PC-3 (cell line): ENCODE measurements at regions of chr2 and their contacts with region 1.

Region 1: GRCh38 chr2:179951680-179952079 is 55.4 kb downstream of the CWC22 start:
- DNase-seq: no peak
- ATAC-seq: no peak
- H3K4me3 ChIP-seq: no peak overlapping the region
- H3K27ac ChIP-seq: no peak overlapping the region
- H3K4me1 ChIP-seq: peaks cover 15% of the 10 kb centered on the region
- H3K27me3 ChIP-seq: no peaks in the 10 kb centered on the region
- CTCF ChIP-seq: no peak

Region 2: DNA sequence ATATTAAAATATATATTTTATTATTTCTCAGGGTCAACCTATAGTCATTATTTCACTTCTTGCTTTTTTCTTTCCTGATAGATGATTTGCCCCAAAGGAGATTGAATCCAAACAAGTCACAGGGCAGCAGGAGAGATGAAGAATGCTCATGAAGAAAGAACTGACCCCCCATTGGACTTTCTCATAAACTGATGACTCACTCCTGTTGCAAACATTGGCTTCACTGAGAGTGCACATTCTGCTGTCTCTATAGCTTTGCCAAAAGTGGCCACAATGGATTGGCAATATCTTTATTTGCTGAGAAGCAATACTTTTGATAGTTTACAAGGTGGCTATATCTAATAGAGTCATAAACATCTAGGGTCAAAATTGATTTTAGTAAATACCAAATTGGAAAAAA is 34.4 kb before region 1 on chr2:
- CTCF ChIA-PET with region 1: no interaction called
- POLR2A ChIA-PET with region 1: no interaction called
- intact Hi-C with region 1: loop called (anchors 1 kb)
- DNase-seq: peak; percentile 80
- ATAC-seq: peak; percentile 89
- H3K4me3 ChIP-seq: no peak overlapping the region
- H3K27ac ChIP-seq: no peak overlapping the region
- H3K4me1 ChIP-seq: peaks cover 6% of the 10 kb centered on the region
- H3K27me3 ChIP-seq: no peaks in the 10 kb centered on the region
- CTCF ChIP-seq: no peak

Region 3: GRCh38 chr2:179963626-179964025 is 11.9 kb after region 1 on chr2:
- CTCF ChIA-PET with region 1: no interaction called
- POLR2A ChIA-PET with region 1: no interaction called
- intact Hi-C with region 1: loop called (anchors 1 kb)
- DNase-seq: peak; percentile 42
- ATAC-seq: peak; percentile 80
- H3K4me3 ChIP-seq: no peak overlapping the region
- H3K27ac ChIP-seq: peak overlapping the region; percentile 22; the same call in 1 of the 2 replicates
- H3K4me1 ChIP-seq: peaks cover 9% of the 10 kb centered on the region
- H3K27me3 ChIP-seq: no peaks in the 10 kb centered on the region
- CTCF ChIP-seq: no peak

Region 4: DNA sequence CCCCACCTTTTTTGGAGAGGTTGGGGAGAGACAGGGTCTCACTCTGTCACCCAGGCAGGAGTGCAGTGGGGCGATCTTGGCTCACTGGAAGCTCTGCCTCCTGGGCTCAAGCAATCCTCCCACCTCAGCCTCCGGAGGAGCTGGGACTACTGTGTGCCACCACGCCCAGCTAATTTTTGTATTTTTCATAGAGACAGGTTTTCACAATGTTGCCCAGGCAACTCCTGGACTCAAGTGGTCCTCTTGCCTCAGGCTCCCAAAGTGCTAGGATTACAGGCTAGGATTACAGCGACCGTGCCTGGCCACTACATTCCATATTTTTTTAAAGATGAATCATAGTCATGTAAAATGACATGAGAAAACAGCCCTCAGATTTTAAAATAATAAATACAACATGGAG is 23.1 kb after region 1 on chr2:
- CTCF ChIA-PET with region 1: no interaction called
- POLR2A ChIA-PET with region 1: no interaction called
- intact Hi-C with region 1: loop called (anchors 2 kb)
- DNase-seq: peak; percentile 81
- ATAC-seq: peak; percentile 99
- H3K4me3 ChIP-seq: no peak overlapping the region
- H3K27ac ChIP-seq: peak overlapping the region; percentile 54
- H3K4me1 ChIP-seq: peaks cover 16% of the 10 kb centered on the region
- H3K27me3 ChIP-seq: no peaks in the 10 kb centered on the region
- CTCF ChIP-seq: no peak

Region 5: DNA sequence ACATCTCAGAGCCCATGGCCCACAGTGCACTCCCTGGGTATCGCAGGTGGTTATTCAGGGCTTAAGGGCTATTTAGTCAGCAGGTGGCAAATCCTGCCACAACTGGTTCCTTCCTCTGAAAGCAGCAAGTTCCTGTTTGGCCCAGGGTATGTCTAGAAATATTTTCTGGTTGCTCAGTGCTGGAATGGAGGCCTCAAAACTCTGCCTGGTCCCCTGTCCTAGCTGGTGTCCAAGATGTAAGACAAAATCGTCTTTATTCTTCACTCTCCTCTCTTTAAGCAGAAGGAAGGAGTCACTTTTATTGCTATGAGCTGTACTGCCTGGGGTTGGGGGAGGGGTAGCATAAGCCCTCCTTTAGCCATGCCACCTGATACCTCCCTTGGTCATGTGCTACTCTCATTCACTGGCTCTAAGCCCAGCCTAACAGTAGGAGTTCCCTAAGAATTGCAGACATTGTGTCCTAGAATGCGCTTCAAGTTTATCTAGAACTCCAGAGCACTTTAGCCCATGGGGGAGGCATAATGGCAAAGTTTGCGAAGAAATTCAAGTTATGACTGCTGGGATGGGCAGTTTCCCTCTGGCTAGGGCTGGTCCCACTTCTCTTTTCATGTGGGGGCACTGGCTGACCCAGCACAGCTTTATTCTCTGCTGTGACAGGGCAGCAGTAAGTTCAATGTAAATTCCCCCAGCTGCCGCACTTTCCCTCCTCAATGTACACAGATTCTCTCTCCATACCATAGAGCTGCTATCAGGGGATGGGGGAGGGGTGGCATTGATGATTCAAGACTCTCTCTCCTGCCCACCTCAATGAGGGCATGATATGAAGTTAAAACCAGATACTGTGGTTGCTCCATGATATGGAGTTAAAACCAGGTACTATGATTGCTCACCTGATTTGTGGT is 82.6 kb after region 1 on chr2:
- CTCF ChIA-PET with region 1: no interaction called
- POLR2A ChIA-PET with region 1: no interaction called
- intact Hi-C with region 1: no loop called
- DNase-seq: peak; percentile 83
- ATAC-seq: peak; percentile 97
- H3K4me3 ChIP-seq: no peak overlapping the region
- H3K27ac ChIP-seq: peak overlapping the region; percentile 38; the same call in 1 of the 2 replicates
- H3K4me1 ChIP-seq: peaks cover 15% of the 10 kb centered on the region
- H3K27me3 ChIP-seq: no peaks in the 10 kb centered on the region
- CTCF ChIP-seq: no peak

Region 6: GRCh38 chr2:180056367-180057118 is 104.9 kb after region 1 on chr2:
- CTCF ChIA-PET with region 1: no interaction called
- POLR2A ChIA-PET with region 1: no interaction called
- intact Hi-C with region 1: no loop called
- DNase-seq: no peak
- ATAC-seq: no peak
- H3K4me3 ChIP-seq: no peak overlapping the region
- H3K27ac ChIP-seq: no peak overlapping the region
- H3K4me1 ChIP-seq: no peaks in the 10 kb centered on the region
- H3K27me3 ChIP-seq: no peaks in the 10 kb centered on the region
- CTCF ChIP-seq: no peak